ENCODE measurements at regions of chr16 and their contacts with region 1.

Region 1: GRCh38 chr16:28984619-28985135 is at the start of gene LAT:
- DNase-seq: no peak
- ATAC-seq: peak; percentile 89
- H3K4me3 ChIP-seq: no peak within 1 kb of the TSS
- H3K27ac ChIP-seq: peak within 1 kb of the TSS; percentile 76
- H3K4me1 ChIP-seq: peaks cover 12% of the 10 kb centered on the region
- H3K27me3 ChIP-seq: no peaks in the 10 kb centered on the region
- CTCF ChIP-seq: no peak
- EP300 ChIP-seq: no peak
- POLR2A ChIP-seq: no peak; the same call in 1 of the 2 replicates
- RAD21 ChIP-seq: no peak
- polyA plus RNA-seq, gene LAT: 0.39 to 1.2 TPM

Region 2: GRCh38 chr16:28835867-28836744 is 148.6 kb before region 1 on chr16:
- CTCF ChIA-PET with region 1: no interaction called
- POLR2A ChIA-PET with region 1: no interaction called
- RAD21 ChIA-PET with region 1: no interaction called
- SMC1A ChIA-PET with region 1: no interaction called
- in situ Hi-C with region 1: no loop called
- intact Hi-C with region 1: no loop called
- DNase-seq: no peak
- ATAC-seq: no peak
- H3K4me3 ChIP-seq: no peak overlapping the region
- H3K27ac ChIP-seq: no peak overlapping the region
- H3K4me1 ChIP-seq: no peaks in the 10 kb centered on the region
- H3K27me3 ChIP-seq: no peaks in the 10 kb centered on the region
- CTCF ChIP-seq: no peak
- EP300 ChIP-seq: no peak
- POLR2A ChIP-seq: no peak; the same call in 1 of the 2 replicates
- RAD21 ChIP-seq: no peak

Region 3: DNA sequence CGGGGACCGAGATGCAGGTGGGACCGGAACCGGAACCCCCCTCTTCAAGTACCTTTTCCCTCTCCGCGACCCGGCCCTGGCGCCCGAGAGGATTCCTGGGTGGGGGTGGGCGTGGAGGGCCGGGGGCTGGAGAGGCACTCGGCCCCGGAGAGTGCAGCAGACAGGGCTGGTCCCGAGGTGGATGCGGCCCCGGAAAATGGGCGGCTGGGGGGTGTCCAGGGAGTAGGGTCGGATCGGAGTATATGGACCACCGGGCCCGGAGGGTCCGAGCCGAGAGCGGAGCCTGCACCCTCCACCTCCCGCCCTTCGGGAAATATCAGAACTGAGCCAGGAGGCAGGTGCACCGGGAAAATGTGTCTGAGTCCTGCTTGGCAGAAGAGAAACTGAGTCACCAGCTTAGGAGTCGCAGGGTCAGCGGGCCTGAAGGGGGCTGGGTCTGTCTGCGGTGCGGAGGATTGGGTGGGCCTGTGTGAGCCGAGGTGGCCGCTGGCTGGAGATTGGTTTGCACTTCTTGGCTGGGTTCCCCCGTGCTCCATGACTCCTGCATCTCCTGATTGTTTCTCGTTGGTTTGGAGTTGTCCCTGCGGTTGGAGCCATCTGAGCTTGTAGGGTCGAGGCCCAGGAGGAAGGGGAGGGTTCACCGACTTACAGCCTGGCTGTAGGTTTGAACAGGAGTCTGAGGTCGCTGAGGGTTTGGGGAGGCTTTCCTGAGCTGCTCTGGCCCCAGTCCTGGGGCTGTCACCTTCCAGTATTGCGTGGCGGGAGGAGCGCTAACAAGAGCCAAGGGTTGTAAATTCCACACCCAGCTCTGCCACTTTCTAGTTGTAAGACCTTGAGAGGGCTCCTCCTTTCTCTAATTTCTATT is 120.5 kb before region 1 on chr16:
- CTCF ChIA-PET with region 1: no interaction called
- POLR2A ChIA-PET with region 1: no interaction called
- RAD21 ChIA-PET with region 1: no interaction called
- SMC1A ChIA-PET with region 1: no interaction called
- in situ Hi-C with region 1: no loop called
- intact Hi-C with region 1: no loop called
- DNase-seq: no peak
- ATAC-seq: peak; percentile 19
- H3K4me3 ChIP-seq: peak overlapping the region; percentile 78
- H3K27ac ChIP-seq: peak overlapping the region; percentile 99
- H3K4me1 ChIP-seq: peaks cover 10% of the 10 kb centered on the region
- H3K27me3 ChIP-seq: no peaks in the 10 kb centered on the region
- CTCF ChIP-seq: no peak
- EP300 ChIP-seq: no peak
- POLR2A ChIP-seq: no peak
- RAD21 ChIP-seq: no peak

Region 4: DNA sequence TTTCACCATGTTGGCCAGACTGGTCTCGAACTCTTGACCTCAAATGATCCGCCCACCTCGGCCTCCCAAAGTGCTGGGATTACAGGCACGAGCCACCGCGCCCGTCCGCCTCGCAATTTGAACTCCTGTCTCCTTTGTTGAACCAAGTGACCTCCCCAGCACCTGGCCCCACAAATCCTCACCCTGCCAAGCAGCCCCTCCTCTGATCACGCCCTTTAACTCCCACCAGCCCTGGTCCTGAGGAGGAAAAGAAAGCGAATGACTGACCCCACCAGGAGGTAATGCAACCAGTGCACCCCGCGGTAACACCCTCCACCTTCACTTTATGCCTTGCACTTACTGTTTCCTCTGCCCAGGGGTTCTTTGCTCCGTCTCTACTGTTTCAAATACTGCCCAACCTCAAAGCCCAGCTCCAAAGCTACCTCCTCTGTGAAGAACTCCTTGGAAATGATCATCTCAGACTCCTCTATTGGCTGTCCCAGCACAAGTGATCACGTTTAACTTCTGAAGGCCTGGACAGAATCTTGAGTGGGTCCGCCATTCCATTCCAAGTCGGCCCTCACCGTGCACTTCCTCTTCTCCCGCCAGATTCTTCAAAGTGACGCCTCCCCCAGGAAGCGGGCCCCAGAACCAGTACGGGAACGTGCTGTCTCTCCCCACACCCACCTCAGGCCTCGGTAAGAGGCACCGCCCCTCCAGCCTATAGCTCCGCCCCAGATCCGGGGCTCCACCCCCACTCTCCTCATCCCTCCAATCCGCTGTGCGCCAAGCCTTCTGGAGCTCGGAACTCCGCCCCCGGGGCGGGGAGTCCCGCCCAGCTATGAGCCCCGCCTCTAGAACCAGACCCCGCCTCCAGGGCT is 48.5 kb before region 1 on chr16:
- CTCF ChIA-PET with region 1: no interaction called
- POLR2A ChIA-PET with region 1: no interaction called
- RAD21 ChIA-PET with region 1: no interaction called
- SMC1A ChIA-PET with region 1: no interaction called
- in situ Hi-C with region 1: no loop called
- intact Hi-C with region 1: no loop called
- DNase-seq: no peak
- ATAC-seq: peak; percentile 89
- H3K4me3 ChIP-seq: no peak overlapping the region
- H3K27ac ChIP-seq: no peak overlapping the region
- H3K4me1 ChIP-seq: peaks cover 9% of the 10 kb centered on the region
- H3K27me3 ChIP-seq: no peaks in the 10 kb centered on the region
- CTCF ChIP-seq: no peak
- EP300 ChIP-seq: no peak
- POLR2A ChIP-seq: no peak
- RAD21 ChIP-seq: no peak

Region 5: DNA sequence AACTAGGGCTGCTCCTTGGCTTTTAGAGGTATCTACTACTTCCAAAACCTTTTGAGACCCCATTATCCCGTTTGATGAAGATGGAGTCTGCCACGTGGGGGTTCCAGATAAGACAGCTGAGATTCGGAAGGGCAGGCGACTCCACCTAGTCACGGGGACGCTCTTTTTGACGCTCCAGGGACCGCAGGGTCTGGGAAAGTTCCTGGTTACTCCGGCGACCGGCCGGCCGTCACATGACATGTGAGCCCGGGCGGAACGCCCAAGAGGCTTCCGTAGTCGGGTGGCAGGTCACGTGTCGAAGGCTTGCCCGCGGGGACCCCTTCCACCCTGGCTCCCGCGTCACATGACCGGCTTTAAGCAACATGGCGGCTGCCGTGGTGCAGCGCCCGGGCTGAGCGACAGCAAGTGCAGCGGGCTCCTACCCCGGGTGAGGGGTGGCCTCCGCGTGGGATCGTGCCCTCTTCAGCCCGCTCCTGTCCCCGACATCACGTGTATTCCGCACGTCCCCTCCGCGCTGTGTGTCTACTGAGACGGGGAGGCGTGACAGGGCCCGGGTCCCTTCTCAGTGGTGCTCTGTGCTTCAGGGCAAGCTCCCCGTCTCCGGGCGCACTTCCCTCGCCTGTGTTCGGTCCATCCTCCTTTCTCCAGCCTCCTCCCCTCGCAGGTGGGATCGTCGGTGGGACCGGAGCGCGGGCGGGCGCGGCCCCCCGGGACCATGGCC is 10.1 kb before region 1 on chr16 and contains the start of gene SPNS1:
- CTCF ChIA-PET with region 1: interaction called, 18 read pairs
- POLR2A ChIA-PET with region 1: interaction called, 8 read pairs
- RAD21 ChIA-PET with region 1: interaction called, 10 read pairs
- SMC1A ChIA-PET with region 1: interaction called, 3 read pairs
- in situ Hi-C with region 1: no loop called
- intact Hi-C with region 1: no loop called
- DNase-seq: peak; percentile 74
- ATAC-seq: peak; percentile 97
- H3K4me3 ChIP-seq: peak within 1 kb of the TSS; percentile 92
- H3K27ac ChIP-seq: peak within 1 kb of the TSS; percentile 58
- H3K4me1 ChIP-seq: peaks cover 4% of the 10 kb centered on the region
- H3K27me3 ChIP-seq: no peaks in the 10 kb centered on the region
- CTCF ChIP-seq: no peak
- EP300 ChIP-seq: peak; percentile 52 to 61; a peak in 1 of 4 replicates
- POLR2A ChIP-seq: peak; percentile 92
- RAD21 ChIP-seq: no peak
- polyA plus RNA-seq, gene SPNS1: 0.16 to 2.3 TPM

Measured in GM12878 (cell line).